Spleen (tissue), 13 donors: ENCODE measurements at regions of chr1 and their contacts with region 1.

Region 1: GRCh38 chr1:84433258-84434080 is 35.2 kb downstream of the DNASE2B start:
- DNase-seq: no peak
- H3K4me3 ChIP-seq: peak overlapping the region in 5 of 8 donors; percentile 9 to 52 (median 20)
- H3K27ac ChIP-seq: peak overlapping the region in 5 of 8 donors; percentile 23 to 75 (median 62)
- H3K4me1 ChIP-seq: peaks cover 13 to 53% (median 43%) of the 10 kb centered on the region in 6 donors
- H3K27me3 ChIP-seq: no peaks in the 10 kb centered on the region
- CTCF ChIP-seq: peak; percentile 36 to 79 (median 69)
- POLR2A ChIP-seq: no peak

Region 2: DNA sequence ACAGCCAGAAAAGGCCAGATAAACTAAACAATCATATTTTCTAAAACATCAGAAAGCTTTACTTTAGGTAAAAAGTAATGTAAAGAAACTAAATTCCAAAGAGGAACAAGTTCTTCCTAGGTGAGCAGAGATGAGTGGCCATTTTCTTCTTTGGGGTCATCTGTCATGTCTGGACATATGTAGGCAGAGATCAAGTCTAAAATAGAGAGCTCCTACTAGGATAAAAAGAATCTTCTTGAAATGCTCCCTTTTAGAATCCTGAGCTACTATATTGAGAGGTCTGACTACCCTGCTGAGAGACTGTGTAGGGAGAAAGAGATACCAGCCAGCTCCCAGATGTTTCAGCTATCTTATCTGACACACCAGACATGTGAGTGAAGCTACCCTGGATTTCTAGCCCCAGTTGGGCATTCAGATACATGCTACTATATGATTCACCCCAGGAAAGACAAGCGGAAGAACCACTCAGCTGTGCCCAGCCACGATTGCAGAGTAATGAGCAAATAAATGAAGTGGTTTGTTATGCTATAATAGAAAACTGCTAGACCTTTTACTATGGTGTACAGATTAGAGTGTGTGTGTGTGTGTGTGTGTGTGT is 514.7 kb before region 1 on chr1:
- intact Hi-C with region 1: no loop called
- DNase-seq: no peak
- H3K4me3 ChIP-seq: no peak overlapping the region
- H3K27ac ChIP-seq: no peak overlapping the region
- H3K4me1 ChIP-seq: no peaks in the 10 kb centered on the region
- H3K27me3 ChIP-seq: no peaks in the 10 kb centered on the region
- CTCF ChIP-seq: no peak
- POLR2A ChIP-seq: no peak

Region 3: DNA sequence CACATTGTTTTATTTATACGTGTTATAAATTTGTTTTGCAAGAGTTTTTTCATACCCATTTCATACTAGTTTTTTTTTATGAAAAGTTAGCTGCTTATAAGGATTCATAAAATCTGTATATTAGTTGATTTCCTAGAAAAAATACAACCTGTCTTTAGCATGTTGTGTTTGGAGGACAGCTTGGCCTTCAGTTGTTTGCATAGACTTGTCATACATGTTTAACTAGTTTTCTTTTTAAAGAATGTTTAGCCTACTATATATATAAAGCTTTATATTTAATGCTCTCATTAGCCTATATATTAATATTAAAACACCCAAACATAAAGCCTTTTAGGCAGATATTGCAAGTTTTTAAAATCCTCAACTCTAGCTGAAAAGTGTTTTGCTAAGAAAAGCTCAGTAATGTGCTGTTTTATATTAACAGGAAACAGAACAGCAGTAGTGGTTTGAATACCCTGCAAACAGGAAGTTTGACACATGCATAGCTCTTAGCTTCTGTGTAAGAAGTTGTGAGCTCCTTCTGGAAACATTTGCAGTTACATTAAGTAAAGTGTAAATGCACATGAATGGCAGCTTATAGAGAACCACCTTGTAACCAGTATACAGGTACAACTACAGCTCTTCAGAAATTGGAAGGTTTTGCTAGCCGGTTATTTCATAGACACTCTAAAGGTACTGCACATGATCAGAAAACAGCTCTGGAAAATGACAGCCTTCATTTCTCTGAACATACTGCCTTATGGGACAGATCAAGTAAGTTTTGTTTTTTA is 289.5 kb before region 1 on chr1 and contains the start of gene PRKACB:
- intact Hi-C with region 1: loop called (anchors 5 kb)
- DNase-seq: no peak
- H3K4me3 ChIP-seq: peak within 1 kb of the TSS; percentile 1 to 65 (median 30)
- H3K27ac ChIP-seq: peak within 1 kb of the TSS; percentile 10 to 85 (median 78)
- H3K4me1 ChIP-seq: peaks cover 8 to 79% (median 49%) of the 10 kb centered on the region in 6 donors
- H3K27me3 ChIP-seq: no peaks in the 10 kb centered on the region
- CTCF ChIP-seq: no peak
- POLR2A ChIP-seq: peak in 1 of 3 donors; percentile 55
- total RNA-seq, gene PRKACB: 55.6 to 93.0 (median 73.4) TPM

Region 4: GRCh38 chr1:84467298-84467697 is 33.8 kb after region 1 on chr1:
- intact Hi-C with region 1: no loop called
- DNase-seq: no peak
- H3K4me3 ChIP-seq: no peak overlapping the region
- H3K27ac ChIP-seq: no peak overlapping the region
- H3K4me1 ChIP-seq: no peaks in the 10 kb centered on the region
- H3K27me3 ChIP-seq: peaks cover 0 to 41% (median 3%) of the 10 kb centered on the region in 7 donors
- CTCF ChIP-seq: no peak
- POLR2A ChIP-seq: no peak

Region 5: GRCh38 chr1:84489766-84490165 is 56.3 kb after region 1 on chr1:
- intact Hi-C with region 1: no loop called
- DNase-seq: no peak
- H3K4me3 ChIP-seq: no peak overlapping the region
- H3K27ac ChIP-seq: no peak overlapping the region
- H3K4me1 ChIP-seq: peaks cover 0 to 26% (median 6%) of the 10 kb centered on the region in 6 donors
- H3K27me3 ChIP-seq: no peaks in the 10 kb centered on the region
- CTCF ChIP-seq: no peak
- POLR2A ChIP-seq: no peak

Region 6: DNA sequence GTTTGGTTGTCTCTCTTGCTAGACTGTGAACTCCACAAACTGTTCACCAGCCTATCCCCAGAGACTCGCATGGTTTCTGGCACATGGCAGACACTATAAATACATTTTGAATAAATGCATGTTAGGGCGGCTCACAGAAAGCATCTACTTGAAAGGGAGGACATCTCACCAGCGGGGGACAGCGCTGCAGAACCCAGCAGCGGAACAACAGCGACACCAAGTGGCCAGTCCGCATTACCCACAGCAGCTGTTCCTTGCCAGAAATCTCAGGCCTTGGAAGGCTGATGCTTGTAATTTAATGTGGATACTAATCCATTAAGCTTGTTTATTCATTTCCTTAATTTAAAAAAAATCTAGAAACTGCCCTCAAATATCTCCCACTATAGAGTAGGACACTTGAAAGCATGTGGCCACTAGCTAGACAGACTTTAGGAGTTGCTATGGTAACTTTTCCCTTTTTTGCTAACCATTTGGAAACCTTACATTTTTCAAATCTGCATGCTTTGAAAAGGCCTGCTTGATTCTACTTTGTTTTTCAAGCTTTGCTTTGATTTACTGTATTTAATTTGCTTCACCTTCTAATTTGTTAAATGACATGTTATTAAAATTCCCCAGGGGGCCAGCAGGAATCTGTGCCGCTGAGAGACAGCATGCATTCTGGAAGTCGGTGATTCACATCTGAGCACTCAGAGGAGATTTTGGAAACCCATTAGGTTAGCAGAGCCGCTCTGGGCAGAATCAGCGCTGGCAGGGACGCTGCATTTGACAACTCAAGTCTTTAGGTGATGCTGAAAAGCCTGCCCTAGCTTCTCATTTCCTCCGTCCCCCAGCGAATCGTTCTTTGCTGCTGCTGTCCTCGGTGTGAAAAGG is 320.3 kb after region 1 on chr1:
- intact Hi-C with region 1: loop called (anchors 10 kb)
- DNase-seq: peak; percentile 86
- H3K4me3 ChIP-seq: no peak overlapping the region
- H3K27ac ChIP-seq: no peak overlapping the region
- H3K4me1 ChIP-seq: peaks cover 0 to 2% (median 0%) of the 10 kb centered on the region in 6 donors
- H3K27me3 ChIP-seq: peaks cover 0 to 12% (median 0%) of the 10 kb centered on the region in 7 donors
- CTCF ChIP-seq: peak; percentile 68 to 92 (median 81)
- POLR2A ChIP-seq: no peak